CD4-positive, alpha-beta memory T cell (primary cell): ENCODE measurements at regions of chr9 and their contacts with region 1.

Region 1: GRCh38 chr9:2657427-2657826 is 35.8 kb downstream of the VLDLR start:
- DNase-seq: peak in 3 of 5 donors; percentile 2 to 39 (median 37)
- H3K4me3 ChIP-seq: no peak overlapping the region
- H3K4me3 Mint-ChIP-seq: peak overlapping the region in 5 of 8 donors; percentile 2 to 61 (median 57)
- H3K27ac ChIP-seq: no peak overlapping the region
- H3K27ac Mint-ChIP-seq: peak overlapping the region in 6 of 7 donors; percentile 26 to 82 (median 54)
- H3K4me1 ChIP-seq: peaks cover 24% of the 10 kb centered on the region
- H3K4me1 Mint-ChIP-seq: peaks cover 13 to 28% (median 21%) of the 10 kb centered on the region in 4 donors
- H3K27me3 ChIP-seq: no peaks in the 10 kb centered on the region
- H3K27me3 Mint-ChIP-seq: peaks cover 0 to 1% of the 10 kb centered on the region in 2 donors

Region 2: DNA sequence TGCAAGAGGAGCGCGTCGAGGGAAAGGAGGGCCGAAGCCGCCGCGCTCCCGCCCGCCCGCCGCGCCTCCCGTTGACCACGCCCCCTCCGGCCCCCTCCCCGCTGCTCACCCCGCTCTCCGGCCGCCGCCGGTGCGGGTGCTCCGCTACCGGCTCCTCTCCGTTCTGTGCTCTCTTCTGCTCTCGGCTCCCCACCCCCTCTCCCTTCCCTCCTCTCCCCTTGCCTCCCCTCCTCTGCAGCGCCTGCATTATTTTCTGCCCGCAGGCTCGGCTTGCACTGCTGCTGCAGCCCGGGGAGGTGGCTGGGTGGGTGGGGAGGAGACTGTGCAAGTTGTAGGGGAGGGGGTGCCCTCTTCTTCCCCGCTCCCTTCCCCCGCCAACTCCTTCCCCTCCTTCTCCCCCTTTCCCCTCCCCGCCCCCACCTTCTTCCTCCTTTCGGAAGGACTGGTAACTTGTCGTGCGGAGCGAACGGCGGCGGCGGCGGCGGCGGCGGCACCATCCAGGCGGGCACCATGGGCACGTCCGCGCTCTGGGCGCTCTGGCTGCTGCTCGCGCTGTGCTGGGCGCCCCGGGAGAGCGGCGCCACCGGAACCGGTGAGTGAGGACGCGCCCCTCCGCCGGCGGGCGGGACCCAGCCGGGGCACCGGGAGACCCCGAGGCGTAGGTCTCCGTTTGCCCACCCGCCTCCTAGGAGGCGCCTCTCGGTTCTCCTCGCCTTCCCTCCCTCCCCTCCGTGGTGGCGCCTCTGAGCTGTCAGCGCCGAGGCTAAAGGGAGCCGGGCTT is 35.6 kb before region 1 on chr9 and contains the start of gene VLDLR:
- CTCF ChIA-PET with region 1: no interaction called
- POLR2A ChIA-PET with region 1: no interaction called
- intact Hi-C with region 1: loop called (anchors 2 kb)
- DNase-seq: peak in 3 of 5 donors; percentile 5 to 11 (median 9)
- H3K4me3 ChIP-seq: peak within 1 kb of the TSS in 1 of 2 donors; percentile 15
- H3K4me3 Mint-ChIP-seq: peak within 1 kb of the TSS; percentile 84 to 91 (median 88)
- H3K27ac ChIP-seq: no peak within 1 kb of the TSS
- H3K27ac Mint-ChIP-seq: peak within 1 kb of the TSS in 4 of 7 donors; percentile 9 to 74 (median 36)
- H3K4me1 ChIP-seq: peaks cover 18% of the 10 kb centered on the region
- H3K4me1 Mint-ChIP-seq: peaks cover 10 to 29% (median 15%) of the 10 kb centered on the region in 4 donors
- H3K27me3 ChIP-seq: peaks cover 13% of the 10 kb centered on the region
- H3K27me3 Mint-ChIP-seq: peaks cover 33 to 36% of the 10 kb centered on the region in 2 donors
- total RNA-seq, gene VLDLR: 0.38 to 0.50 TPM

Region 3: DNA sequence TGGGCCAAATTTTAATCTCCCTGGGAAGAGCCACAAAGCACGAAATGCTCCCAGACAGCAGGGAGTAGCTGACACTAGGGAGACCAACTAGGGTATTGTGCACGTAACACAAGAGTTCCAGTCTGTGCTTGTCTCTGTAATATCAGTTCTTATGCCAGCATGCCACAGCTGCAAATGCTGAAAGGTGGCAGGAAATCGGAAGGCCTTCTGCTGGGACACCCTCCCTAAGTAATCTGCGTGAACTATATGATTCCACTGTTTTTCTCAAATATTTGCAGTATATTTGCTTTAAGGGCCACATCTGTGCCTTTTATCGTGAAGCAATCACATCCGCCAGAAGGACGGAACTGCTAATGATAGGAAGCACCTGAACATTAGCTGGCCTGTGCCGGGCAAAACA is 23.3 kb before region 1 on chr9:
- CTCF ChIA-PET with region 1: no interaction called
- POLR2A ChIA-PET with region 1: no interaction called
- intact Hi-C with region 1: no loop called
- DNase-seq: no peak
- H3K4me3 ChIP-seq: no peak overlapping the region
- H3K4me3 Mint-ChIP-seq: no peak overlapping the region
- H3K27ac ChIP-seq: no peak overlapping the region
- H3K27ac Mint-ChIP-seq: no peak overlapping the region
- H3K4me1 ChIP-seq: no peaks in the 10 kb centered on the region
- H3K4me1 Mint-ChIP-seq: no peaks in the 10 kb centered on the region
- H3K27me3 ChIP-seq: no peaks in the 10 kb centered on the region
- H3K27me3 Mint-ChIP-seq: peaks cover 1 to 5% of the 10 kb centered on the region in 2 donors

Region 4: GRCh38 chr9:2697492-2697891 is 40.1 kb after region 1 on chr9:
- CTCF ChIA-PET with region 1: no interaction called
- POLR2A ChIA-PET with region 1: no interaction called
- intact Hi-C with region 1: no loop called
- DNase-seq: no peak
- H3K4me3 ChIP-seq: no peak overlapping the region
- H3K4me3 Mint-ChIP-seq: no peak overlapping the region
- H3K27ac ChIP-seq: no peak overlapping the region
- H3K27ac Mint-ChIP-seq: no peak overlapping the region
- H3K4me1 ChIP-seq: no peaks in the 10 kb centered on the region
- H3K4me1 Mint-ChIP-seq: no peaks in the 10 kb centered on the region
- H3K27me3 ChIP-seq: no peaks in the 10 kb centered on the region
- H3K27me3 Mint-ChIP-seq: no peaks in the 10 kb centered on the region

Region 5: GRCh38 chr9:2800393-2801179 is 143.2 kb after region 1 on chr9:
- CTCF ChIA-PET with region 1: no interaction called
- POLR2A ChIA-PET with region 1: no interaction called
- intact Hi-C with region 1: no loop called
- DNase-seq: no peak
- H3K4me3 ChIP-seq: no peak overlapping the region
- H3K4me3 Mint-ChIP-seq: no peak overlapping the region
- H3K27ac ChIP-seq: no peak overlapping the region
- H3K27ac Mint-ChIP-seq: peak overlapping the region in 1 of 7 donors; percentile 85
- H3K4me1 ChIP-seq: no peaks in the 10 kb centered on the region
- H3K4me1 Mint-ChIP-seq: peaks cover 0 to 1% (median 0%) of the 10 kb centered on the region in 4 donors
- H3K27me3 ChIP-seq: no peaks in the 10 kb centered on the region
- H3K27me3 Mint-ChIP-seq: no peaks in the 10 kb centered on the region